Caco-2 (cell line): ENCODE measurements at regions of chr1 and their contacts with region 1.

Region 1: GRCh38 chr1:26993237-26994019 is at the start of gene TRNP1:
- DNase-seq: peak; percentile 91
- H3K4me3 ChIP-seq: peak within 1 kb of the TSS; percentile 83
- H3K4me3 Mint-ChIP-seq: peak within 1 kb of the TSS; percentile 76
- H3K27ac Mint-ChIP-seq: peak within 1 kb of the TSS; percentile 87
- H3K4me1 ChIP-seq: peaks cover 56% of the 10 kb centered on the region
- H3K4me1 Mint-ChIP-seq: peaks cover 17% of the 10 kb centered on the region
- H3K27me3 ChIP-seq: no peaks in the 10 kb centered on the region
- H3K27me3 Mint-ChIP-seq: no peaks in the 10 kb centered on the region
- CTCF ChIP-seq: no peak
- total RNA-seq, gene TRNP1: 23.3 and 23.6 TPM in 2 replicates

Region 2: DNA sequence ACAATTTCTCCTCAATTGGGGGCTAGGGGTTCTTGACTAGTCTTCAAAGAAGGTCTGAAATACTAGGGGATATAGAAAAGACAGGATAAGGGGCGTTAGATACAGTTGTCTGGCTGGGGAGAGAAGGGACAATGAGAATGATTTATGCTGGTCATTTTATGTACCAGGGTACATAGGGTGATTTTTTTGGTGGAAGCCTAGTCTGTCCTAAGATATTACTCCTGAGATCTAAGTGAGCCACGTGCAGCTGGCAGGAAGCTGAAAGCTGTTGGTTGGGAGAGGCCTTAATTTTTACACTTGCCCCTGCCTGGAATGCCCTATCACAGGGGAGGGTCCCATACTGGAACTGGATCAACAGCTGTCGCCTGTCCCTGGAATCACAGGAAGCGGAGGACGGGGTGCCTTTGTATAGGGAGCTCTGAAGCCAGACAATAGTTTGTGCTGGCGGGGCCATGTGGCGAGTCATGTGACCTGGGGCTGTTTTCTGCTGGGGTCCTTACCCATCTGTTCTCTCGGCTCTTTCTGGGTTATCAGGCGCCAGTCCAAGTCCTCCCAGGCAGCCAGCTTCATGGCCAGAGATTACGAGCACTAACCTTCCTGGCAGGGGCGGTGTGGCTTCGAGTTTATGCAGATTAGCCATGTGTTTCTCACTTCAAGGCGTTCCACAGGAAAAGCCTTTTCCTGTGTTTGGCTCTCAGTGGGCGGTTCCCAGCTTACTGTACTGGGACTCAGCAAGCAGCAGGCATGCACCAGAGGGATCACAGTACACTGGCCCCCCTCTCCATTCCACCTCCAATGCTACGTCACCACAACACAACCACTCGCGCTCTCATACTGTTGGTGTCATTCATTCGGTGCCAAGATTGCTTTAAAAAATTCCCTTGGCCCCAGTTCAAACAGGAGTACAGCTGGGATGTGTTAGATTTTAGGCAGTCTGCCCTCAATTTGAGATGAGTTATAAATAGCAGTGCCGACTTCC is 270.1 kb before region 1 on chr1:
- CTCF ChIA-PET with region 1: no interaction called
- POLR2A ChIA-PET with region 1: no interaction called
- intact Hi-C with region 1: no loop called
- DNase-seq: peak; percentile 32 to 41
- H3K4me3 ChIP-seq: no peak overlapping the region
- H3K4me3 Mint-ChIP-seq: no peak overlapping the region
- H3K27ac Mint-ChIP-seq: peak overlapping the region; percentile 11
- H3K4me1 ChIP-seq: peaks cover 45% of the 10 kb centered on the region
- H3K4me1 Mint-ChIP-seq: peaks cover 24% of the 10 kb centered on the region
- H3K27me3 ChIP-seq: no peaks in the 10 kb centered on the region
- H3K27me3 Mint-ChIP-seq: no peaks in the 10 kb centered on the region
- CTCF ChIP-seq: no peak

Region 3: GRCh38 chr1:28067523-28068090 is 1074.2 kb after region 1 on chr1:
- CTCF ChIA-PET with region 1: no interaction called
- POLR2A ChIA-PET with region 1: interaction called, 11 read pairs
- intact Hi-C with region 1: no loop called
- DNase-seq: no peak
- H3K4me3 ChIP-seq: no peak overlapping the region
- H3K4me3 Mint-ChIP-seq: no peak overlapping the region
- H3K27ac Mint-ChIP-seq: no peak overlapping the region
- H3K4me1 ChIP-seq: no peaks in the 10 kb centered on the region
- H3K4me1 Mint-ChIP-seq: no peaks in the 10 kb centered on the region
- H3K27me3 ChIP-seq: no peaks in the 10 kb centered on the region
- H3K27me3 Mint-ChIP-seq: no peaks in the 10 kb centered on the region
- CTCF ChIP-seq: no peak